ENCODE measurements at regions of chr12 and their contacts with region 1.

Region 1: DNA sequence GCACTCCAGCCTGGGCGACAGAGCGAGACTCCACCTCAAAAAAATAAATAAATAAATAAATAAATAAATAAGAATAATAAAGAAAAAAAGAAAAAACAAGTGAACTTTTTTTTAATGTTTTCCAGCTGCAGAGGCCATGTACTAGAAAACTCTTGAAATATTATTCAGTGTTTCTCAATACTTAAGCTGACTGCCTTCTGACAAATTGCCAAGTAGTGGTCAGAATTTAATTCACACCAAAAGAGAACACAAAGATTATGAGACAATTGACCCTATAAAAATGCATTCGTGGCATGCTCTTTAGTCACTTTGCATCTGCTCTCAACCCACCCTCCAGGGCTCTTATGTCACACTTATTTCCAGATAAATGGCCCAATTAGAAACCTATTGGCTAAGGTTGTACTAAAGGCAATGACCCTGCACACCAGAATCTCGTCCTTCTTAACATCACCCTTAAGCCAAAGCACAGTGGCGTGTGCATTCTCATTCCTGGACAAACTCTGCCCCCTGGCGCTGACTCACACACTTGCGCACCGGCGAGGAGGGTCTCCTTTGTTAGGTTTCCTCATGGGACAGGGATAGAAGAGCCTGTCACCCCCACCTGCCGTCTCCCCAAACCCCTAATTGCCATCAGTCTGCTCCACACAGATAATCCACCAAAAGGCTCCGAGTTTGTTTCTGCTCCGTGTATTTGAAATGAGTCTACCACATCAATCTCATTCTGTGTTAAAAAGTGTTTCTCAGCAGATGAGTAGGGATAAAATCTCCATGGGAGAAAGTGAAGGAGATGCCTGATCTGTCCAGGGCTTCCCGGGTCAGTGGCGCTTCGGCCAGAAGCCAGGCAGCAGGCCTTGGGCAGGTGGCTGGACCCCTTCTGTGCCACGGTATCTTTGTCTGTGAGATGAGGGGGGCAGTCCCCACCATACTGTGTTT is 73.1 kb upstream of the CEP83 start:
- DNase-seq: peak; percentile 80
- H3K4me3 Mint-ChIP-seq: no peak overlapping the region
- H3K27ac Mint-ChIP-seq: no peak overlapping the region
- H3K4me1 Mint-ChIP-seq: peaks cover 18% of the 10 kb centered on the region
- H3K27me3 Mint-ChIP-seq: peaks cover 25% of the 10 kb centered on the region
- CTCF ChIP-seq: peak; percentile 69

Region 2: DNA sequence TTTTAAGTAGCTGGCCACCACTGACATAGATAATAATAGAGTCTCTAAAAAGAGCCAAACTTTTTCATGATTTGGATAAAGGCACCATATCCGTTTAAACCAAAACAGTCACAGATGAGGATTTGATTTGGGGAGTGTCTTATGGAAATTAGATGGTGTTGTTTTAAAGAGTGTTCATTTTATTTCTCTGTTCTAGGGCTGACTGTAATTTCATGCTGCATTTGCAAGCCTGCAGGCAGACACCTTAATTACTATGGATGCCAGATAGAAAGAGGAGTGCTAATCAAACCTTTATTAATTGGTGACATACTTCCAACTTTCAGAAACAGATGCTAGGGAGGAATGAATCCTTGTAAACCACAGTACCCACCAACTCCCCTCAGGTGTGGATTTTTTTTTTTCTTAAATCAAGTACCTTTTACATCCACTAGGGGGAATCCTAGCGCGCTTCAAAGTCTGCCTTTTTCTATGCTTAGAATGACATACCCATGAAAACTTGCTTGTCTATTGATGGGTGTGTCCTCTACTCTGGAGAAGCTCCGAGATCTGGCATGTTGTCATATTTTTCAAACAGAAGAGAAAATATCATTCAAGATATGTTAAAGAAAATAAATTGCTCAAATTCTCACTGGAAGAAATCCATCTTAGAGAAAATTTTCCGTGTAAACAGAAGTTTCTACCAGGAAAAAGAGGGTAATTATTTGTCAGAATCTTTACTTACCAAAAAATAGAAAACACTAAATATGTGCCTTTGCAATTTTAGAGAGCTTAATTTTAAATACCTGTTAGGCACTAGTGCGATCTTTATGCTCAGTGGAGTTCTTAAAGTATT is 398.6 kb before region 1 on chr12:
- CTCF ChIA-PET with region 1: interaction called, 4 read pairs
- intact Hi-C with region 1: loop called (anchors 1 kb)
- DNase-seq: peak; percentile 36
- H3K4me3 Mint-ChIP-seq: no peak overlapping the region
- H3K27ac Mint-ChIP-seq: no peak overlapping the region
- H3K4me1 Mint-ChIP-seq: no peaks in the 10 kb centered on the region
- H3K27me3 Mint-ChIP-seq: peaks cover 68% of the 10 kb centered on the region
- CTCF ChIP-seq: peak; percentile 63

Region 3: DNA sequence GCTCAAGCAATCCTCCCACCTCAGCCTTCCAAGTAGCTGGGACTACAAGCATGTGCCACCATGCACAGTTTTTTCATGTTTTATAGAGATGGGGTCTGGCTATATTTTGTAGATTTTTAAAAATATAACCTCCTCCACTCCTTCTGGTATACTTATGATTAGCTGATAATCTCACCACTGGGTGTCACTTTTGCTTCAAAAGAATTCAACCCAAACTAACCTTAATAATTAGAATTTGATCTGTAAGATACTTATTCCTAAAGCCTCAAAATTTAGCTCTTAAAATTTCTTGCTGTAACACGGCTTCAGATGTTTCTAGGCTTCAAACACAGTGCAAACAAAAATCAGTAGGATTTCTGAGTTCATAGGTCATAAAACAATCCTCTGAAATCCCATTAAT is 203.4 kb before region 1 on chr12:
- CTCF ChIA-PET with region 1: no interaction called
- intact Hi-C with region 1: loop called (anchors 1 kb)
- DNase-seq: no peak
- H3K4me3 Mint-ChIP-seq: no peak overlapping the region
- H3K27ac Mint-ChIP-seq: no peak overlapping the region
- H3K4me1 Mint-ChIP-seq: no peaks in the 10 kb centered on the region
- H3K27me3 Mint-ChIP-seq: no peaks in the 10 kb centered on the region
- CTCF ChIP-seq: no peak

Region 4: DNA sequence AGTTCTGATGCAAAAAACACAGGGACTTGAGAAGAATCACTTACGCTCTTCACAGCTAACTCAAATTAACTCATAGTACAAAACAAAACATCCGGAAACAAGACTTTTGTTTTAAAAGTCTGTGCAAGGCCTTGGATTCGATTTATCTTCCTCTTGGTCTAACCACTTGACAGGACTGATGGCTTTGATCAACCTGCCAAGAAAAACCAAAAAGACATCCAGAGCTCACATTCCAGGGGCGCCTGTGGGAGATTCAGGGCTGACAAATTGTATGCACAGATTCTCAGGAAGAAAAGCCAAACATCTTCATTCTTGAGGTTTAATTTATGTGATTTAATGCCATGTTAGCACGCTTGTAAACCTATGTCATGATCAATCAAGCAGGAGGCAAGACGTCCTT is 246.7 kb after region 1 on chr12:
- CTCF ChIA-PET with region 1: no interaction called
- intact Hi-C with region 1: no loop called
- DNase-seq: no peak
- H3K4me3 Mint-ChIP-seq: no peak overlapping the region
- H3K27ac Mint-ChIP-seq: no peak overlapping the region
- H3K4me1 Mint-ChIP-seq: no peaks in the 10 kb centered on the region
- H3K27me3 Mint-ChIP-seq: peaks cover 43% of the 10 kb centered on the region
- CTCF ChIP-seq: no peak